BJ (cell line): ENCODE measurements at regions of chr13 and their contacts with region 1.

Region 1: DNA sequence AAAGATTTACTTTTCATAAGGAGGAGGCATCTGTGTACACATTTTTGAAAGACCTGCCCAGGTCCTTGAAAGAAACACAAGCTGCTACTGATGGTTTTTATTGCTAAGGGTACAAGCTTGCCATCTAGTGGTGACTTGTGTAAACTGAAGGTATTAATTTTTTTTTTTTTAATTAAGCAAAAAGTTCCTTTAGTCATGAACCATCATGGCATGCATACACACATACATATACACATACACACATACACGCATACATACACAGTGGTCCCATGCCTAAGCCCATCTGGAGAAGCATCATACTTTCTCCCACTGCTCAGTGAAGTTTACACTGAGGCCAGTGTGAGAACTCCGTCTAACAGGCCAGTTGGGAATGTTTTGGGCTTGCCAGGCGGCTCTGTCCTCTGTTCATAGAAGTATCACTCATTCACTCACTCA is 312.5 kb downstream of the DCLK1 start:
- DNase-seq: no peak
- H3K4me3 ChIP-seq: no peak overlapping the region
- H3K27me3 ChIP-seq: no peaks in the 10 kb centered on the region
- CTCF ChIP-seq: peak; percentile 69

Region 2: GRCh38 chr13:35804901-35805300 is 13.7 kb before region 1 on chr13:
- CTCF ChIA-PET with region 1: interaction called, 40 read pairs
- POLR2A ChIA-PET with region 1: no interaction called
- DNase-seq: no peak
- H3K4me3 ChIP-seq: no peak overlapping the region
- H3K27me3 ChIP-seq: no peaks in the 10 kb centered on the region
- CTCF ChIP-seq: no peak

Region 3: GRCh38 chr13:35832551-35832950 is 13.9 kb after region 1 on chr13:
- CTCF ChIA-PET with region 1: interaction called, 61 read pairs
- POLR2A ChIA-PET with region 1: no interaction called
- DNase-seq: no peak
- H3K4me3 ChIP-seq: no peak overlapping the region
- H3K27me3 ChIP-seq: no peaks in the 10 kb centered on the region
- CTCF ChIP-seq: no peak

Region 4: GRCh38 chr13:36006348-36006747 is 187.7 kb after region 1 on chr13:
- CTCF ChIA-PET with region 1: no interaction called
- POLR2A ChIA-PET with region 1: no interaction called
- DNase-seq: no peak
- H3K4me3 ChIP-seq: no peak overlapping the region
- H3K27me3 ChIP-seq: no peaks in the 10 kb centered on the region
- CTCF ChIP-seq: no peak